ENCODE measurements at regions of chrX and their contacts with region 1.

Region 1: GRCh38 chrX:8748855-8749254 is 16.9 kb upstream of the ANOS1 start:
- DNase-seq: no peak
- H3K4me3 ChIP-seq: no peak overlapping the region
- H3K27ac ChIP-seq: no peak overlapping the region
- H3K4me1 ChIP-seq: no peaks in the 10 kb centered on the region
- H3K27me3 ChIP-seq: no peaks in the 10 kb centered on the region
- CTCF ChIP-seq: peak in 3 of 4 experiments; percentile 26 to 51 (median 32)
- EP300 ChIP-seq: no peak
- POLR2A ChIP-seq: no peak

Region 2: DNA sequence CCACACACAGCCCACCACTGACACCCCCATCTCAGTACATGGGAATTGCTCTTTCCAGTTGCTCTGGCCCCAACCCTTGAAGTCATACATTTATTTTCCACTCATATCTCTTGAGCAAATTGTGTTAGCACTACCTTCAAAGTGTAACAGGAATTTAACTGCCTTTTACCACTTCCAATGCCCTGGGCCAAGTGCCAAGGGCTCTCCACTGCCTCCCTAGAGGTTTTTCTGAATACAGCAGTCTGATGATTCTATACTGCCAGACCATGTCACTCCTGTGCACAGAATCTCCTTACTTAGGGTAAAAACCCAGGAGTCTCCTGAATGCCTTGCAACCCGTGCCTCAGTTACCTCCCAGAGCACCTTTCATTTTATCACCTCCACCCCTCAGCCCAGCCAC is 175.1 kb before region 1 on chrX:
- intact Hi-C with region 1: no loop called
- DNase-seq: no peak
- H3K4me3 ChIP-seq: no peak overlapping the region
- H3K27ac ChIP-seq: no peak overlapping the region
- H3K4me1 ChIP-seq: no peaks in the 10 kb centered on the region
- H3K27me3 ChIP-seq: no peaks in the 10 kb centered on the region
- CTCF ChIP-seq: no peak
- EP300 ChIP-seq: no peak
- POLR2A ChIP-seq: no peak

Region 3: GRCh38 chrX:8927701-8928100 is 178.8 kb after region 1 on chrX:
- intact Hi-C with region 1: no loop called
- DNase-seq: no peak
- H3K4me3 ChIP-seq: no peak overlapping the region
- H3K27ac ChIP-seq: no peak overlapping the region
- H3K4me1 ChIP-seq: no peaks in the 10 kb centered on the region
- H3K27me3 ChIP-seq: no peaks in the 10 kb centered on the region
- CTCF ChIP-seq: no peak
- EP300 ChIP-seq: no peak
- POLR2A ChIP-seq: no peak

Region 4: DNA sequence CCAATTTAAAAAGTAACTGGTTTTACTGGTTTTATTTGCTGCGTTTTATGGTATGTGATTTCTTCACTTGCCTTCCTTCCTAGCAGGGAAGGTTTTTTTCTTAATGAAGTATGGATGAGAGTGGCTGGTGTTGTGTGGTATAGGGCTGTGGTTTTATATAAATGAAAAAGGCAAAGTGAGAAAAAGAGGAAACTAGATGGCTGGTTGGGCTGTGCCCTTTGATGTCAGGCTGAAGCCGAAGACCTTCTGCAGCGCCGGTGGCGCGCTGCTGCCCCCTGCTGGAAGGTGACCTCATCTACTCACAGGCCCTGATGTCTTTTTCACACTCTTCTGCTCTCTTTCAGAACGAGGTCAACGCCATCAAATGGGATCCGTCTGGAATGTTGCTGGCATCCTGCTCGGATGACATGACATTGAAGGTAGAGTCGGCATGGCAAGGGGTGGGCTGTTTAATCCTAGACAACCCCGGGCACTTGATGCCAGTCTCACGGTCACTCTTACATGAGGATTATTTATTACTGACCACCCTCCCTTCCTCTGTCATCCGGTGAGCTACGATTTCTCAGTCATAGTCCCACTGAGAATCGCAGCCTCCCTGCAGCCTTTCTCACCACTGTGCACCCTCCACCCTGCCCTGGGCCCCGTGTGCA is 960.2 kb after region 1 on chrX:
- intact Hi-C with region 1: loop called (anchors 5 kb)
- DNase-seq: peak; percentile 82
- H3K4me3 ChIP-seq: no peak overlapping the region
- H3K27ac ChIP-seq: no peak overlapping the region
- H3K4me1 ChIP-seq: no peaks in the 10 kb centered on the region
- H3K27me3 ChIP-seq: no peaks in the 10 kb centered on the region
- CTCF ChIP-seq: peak; percentile 35 to 70 (median 56)
- EP300 ChIP-seq: no peak
- POLR2A ChIP-seq: no peak

Measured in sigmoid colon (tissue), 7 donors.